Testis (tissue), 5 donors: ENCODE measurements at regions of chr2 and their contacts with region 1.

Region 1: GRCh38 chr2:102020596-102021181 is 28.9 kb downstream of the IL1R2 start:
- DNase-seq: peak; percentile 95
- H3K4me3 ChIP-seq: no peak overlapping the region
- H3K27ac ChIP-seq: no peak overlapping the region
- H3K4me1 ChIP-seq: peaks cover 27% of the 10 kb centered on the region
- H3K27me3 ChIP-seq: no peaks in the 10 kb centered on the region
- CTCF ChIP-seq: peak; percentile 98 to 99 (median 98)
- POLR2A ChIP-seq: no peak

Region 2: DNA sequence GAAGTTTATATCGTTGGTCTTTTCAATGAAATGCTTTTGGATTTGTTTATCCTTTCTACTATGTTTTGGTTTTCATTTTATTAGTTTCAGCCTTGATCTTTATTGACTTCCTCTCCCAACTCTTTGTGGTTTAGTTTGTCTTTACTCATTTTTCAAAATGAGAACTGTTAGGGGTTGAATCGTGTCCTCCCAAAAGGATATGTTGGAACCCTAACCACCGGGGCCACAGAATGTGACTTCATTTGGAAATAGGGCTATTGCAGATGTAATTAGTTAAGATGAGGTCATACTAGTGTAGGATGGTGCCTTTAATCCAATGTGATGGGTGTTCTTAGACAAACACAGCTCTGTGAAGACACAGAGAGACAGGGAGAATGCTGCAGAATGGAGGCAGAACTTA is 89.3 kb before region 1 on chr2:
- intact Hi-C with region 1: no loop called
- DNase-seq: no peak
- H3K4me3 ChIP-seq: no peak overlapping the region
- H3K27ac ChIP-seq: no peak overlapping the region
- H3K4me1 ChIP-seq: no peaks in the 10 kb centered on the region
- H3K27me3 ChIP-seq: no peaks in the 10 kb centered on the region
- CTCF ChIP-seq: no peak
- POLR2A ChIP-seq: no peak

Region 3: GRCh38 chr2:102082571-102083392 is 62.1 kb after region 1 on chr2:
- intact Hi-C with region 1: no loop called
- DNase-seq: peak; percentile 45
- H3K4me3 ChIP-seq: no peak overlapping the region
- H3K27ac ChIP-seq: peak overlapping the region in 1 of 2 donors; percentile 23
- H3K4me1 ChIP-seq: peaks cover 6% of the 10 kb centered on the region
- H3K27me3 ChIP-seq: no peaks in the 10 kb centered on the region
- CTCF ChIP-seq: no peak
- POLR2A ChIP-seq: no peak

Region 4: GRCh38 chr2:102166189-102166845 is 145.6 kb after region 1 on chr2:
- intact Hi-C with region 1: loop called (anchors 5 kb)
- DNase-seq: peak; percentile 75
- H3K4me3 ChIP-seq: no peak overlapping the region
- H3K27ac ChIP-seq: no peak overlapping the region
- H3K4me1 ChIP-seq: peaks cover 3% of the 10 kb centered on the region
- H3K27me3 ChIP-seq: no peaks in the 10 kb centered on the region
- CTCF ChIP-seq: peak; percentile 48 to 67 (median 65)
- POLR2A ChIP-seq: no peak

Region 5: DNA sequence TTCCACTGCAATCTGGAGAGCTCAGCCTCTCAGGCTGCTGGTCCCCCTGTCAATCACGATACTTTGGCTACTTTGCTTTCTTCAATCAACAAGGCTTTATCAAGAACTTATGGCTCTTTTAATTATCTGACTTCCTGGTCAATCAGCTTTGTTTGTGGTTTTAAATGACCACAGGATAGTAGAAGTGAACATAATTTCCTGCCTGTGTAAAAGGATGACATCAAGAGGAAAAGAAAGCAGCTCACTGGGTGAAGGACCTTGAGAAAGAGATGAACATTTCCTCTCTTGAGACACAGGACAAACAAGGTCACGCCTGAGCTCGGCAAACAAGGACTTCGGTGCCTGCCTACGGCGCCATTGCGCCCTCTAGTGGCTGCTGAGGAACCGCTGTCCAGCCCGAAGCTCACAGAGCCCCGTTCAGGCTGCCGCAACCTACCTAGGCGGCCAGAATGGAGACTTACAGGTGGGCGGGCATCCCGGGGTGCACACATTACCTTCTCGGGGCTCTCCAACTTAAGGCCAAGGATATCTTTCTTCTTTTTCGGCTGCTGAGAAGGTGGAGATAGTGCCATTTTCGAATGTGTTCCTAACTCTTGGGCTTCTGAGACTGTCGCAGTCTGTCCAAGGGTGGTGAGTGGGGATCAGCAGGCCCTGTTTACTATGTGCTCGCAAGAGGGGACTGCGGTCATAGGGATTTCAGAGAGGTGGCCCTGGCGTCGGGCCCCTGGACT is 220.1 kb after region 1 on chr2:
- intact Hi-C with region 1: loop called (anchors 5 kb)
- DNase-seq: peak; percentile 96
- H3K4me3 ChIP-seq: no peak overlapping the region
- H3K27ac ChIP-seq: peak overlapping the region; percentile 27 to 73
- H3K4me1 ChIP-seq: peaks cover 3% of the 10 kb centered on the region
- H3K27me3 ChIP-seq: no peaks in the 10 kb centered on the region
- CTCF ChIP-seq: peak; percentile 93 to 98 (median 95)
- POLR2A ChIP-seq: no peak

Region 6: DNA sequence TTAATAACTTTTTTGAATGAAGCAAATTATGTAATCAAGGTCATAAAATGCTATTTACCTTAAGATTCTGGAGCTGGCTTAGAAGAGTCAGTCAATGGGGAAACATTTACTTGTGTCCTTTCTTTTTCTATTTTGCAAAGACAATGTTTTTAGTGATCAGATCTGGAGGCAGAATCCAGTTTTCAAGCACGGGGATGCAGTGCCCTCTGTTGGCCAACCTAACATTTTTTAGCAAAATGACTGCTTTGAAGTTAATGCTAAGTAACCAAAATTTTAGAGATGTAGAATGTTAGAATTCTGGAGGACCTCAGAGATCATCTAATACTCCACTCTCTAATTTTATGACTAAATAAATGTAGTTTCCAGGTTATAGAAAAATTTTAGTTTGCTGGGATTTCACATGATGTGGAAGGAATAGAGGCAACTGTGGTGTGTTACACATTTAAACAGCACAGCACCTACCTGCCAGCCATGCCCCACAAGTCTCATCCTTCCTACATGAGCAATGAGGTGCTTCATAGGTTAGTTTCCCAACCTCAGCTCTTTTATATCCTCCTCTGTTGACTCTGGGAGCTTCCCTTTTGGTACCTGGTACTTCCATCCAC is 428.8 kb after region 1 on chr2:
- intact Hi-C with region 1: no loop called
- DNase-seq: peak; percentile 59
- H3K4me3 ChIP-seq: no peak overlapping the region
- H3K27ac ChIP-seq: no peak overlapping the region
- H3K4me1 ChIP-seq: no peaks in the 10 kb centered on the region
- H3K27me3 ChIP-seq: no peaks in the 10 kb centered on the region
- CTCF ChIP-seq: peak in 2 of 3 experiments; percentile 44 to 62
- POLR2A ChIP-seq: no peak